ENCODE measurements at regions of chr16 and their contacts with region 1.

Region 1: DNA sequence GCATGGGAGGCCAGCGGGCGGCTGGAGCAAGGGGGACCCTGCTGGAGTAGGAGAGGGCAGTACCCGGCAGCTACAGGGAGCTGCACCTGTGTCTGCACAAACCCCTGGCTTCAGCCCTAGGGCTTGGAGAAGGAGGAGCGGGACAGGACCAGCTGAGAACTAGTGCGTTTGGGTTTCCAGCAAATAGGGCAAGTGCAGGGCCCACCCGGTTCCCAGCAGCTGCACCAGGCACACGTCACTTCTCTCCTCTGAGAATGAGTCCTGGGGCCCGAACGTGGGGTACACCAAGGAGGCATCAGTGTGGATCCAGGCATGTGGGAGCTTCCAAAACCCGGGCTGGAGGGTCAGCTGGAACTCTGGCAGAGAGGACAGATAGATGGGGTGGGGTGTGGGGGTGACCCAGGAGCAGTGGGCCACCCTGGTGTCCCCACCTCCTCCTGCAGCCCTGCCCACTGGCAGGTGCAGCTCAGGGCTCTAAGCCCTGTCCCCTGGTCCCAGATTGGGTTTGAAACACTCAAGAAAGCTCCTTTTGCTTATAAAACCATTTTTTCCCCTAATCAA is 5.6 kb downstream of the C16orf89 start:
- DNase-seq: no peak
- H3K4me3 ChIP-seq: no peak overlapping the region
- H3K27me3 ChIP-seq: peaks cover 2% of the 10 kb centered on the region; the same call in 1 of the 2 replicates
- CTCF ChIP-seq: no peak

Region 2: GRCh38 chr16:5033256-5034169 is 26.6 kb before region 1 on chr16 and contains the start of gene NAGPA:
- CTCF ChIA-PET with region 1: no interaction called
- POLR2A ChIA-PET with region 1: interaction called, 12 read pairs
- DNase-seq: peak; percentile 16
- H3K4me3 ChIP-seq: peak within 1 kb of the TSS; percentile 80
- H3K27me3 ChIP-seq: no peaks in the 10 kb centered on the region
- CTCF ChIP-seq: no peak
- polyA plus RNA-seq, gene NAGPA: 10.8 and 17.3 TPM in 2 replicates

Measured in BJ (cell line).